ENCODE measurements at regions of chr11 and their contacts with region 1.

Region 1: DNA sequence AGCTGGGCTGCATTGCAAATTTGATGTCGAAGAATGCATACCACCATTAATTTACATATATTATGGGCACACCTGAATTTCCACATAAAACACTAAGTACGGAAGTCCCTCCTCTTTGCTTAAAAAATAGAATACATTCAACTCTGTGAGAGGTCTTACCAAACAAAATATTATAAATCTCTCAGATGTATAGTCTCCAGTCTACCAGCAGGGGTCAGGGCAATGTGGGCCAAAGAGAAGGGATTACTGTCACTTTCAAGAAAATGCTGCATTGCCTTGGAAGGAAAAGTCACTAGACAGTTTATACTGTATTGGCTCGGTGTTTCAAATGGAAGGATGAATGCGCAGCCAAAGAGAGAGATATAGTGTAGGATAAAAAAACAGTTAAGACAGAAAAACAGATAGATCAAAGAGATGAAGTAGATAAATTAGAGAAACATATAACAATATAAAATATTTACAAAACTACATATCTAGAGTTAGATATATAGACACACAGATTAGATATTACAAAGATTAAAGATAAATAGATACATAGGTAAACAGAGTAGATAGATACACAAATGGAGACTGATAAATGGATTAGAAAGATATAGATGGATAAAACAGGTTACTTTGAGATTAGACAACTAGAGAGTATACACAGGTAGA is 20.9 kb downstream of the SERGEF start:
- DNase-seq: peak; percentile 49
- ATAC-seq: peak; percentile 72
- H3K4me3 ChIP-seq: no peak overlapping the region
- H3K27ac ChIP-seq: no peak overlapping the region
- H3K4me1 ChIP-seq: peaks cover 4% of the 10 kb centered on the region
- H3K27me3 ChIP-seq: no peaks in the 10 kb centered on the region
- CTCF ChIP-seq: peak; percentile 84

Region 2: GRCh38 chr11:18012863-18013781 is 21.2 kb after region 1 on chr11 and contains the start of gene SERGEF:
- CTCF ChIA-PET with region 1: no interaction called
- POLR2A ChIA-PET with region 1: no interaction called
- intact Hi-C with region 1: loop called (anchors 1 kb)
- DNase-seq: peak; percentile 92
- ATAC-seq: peak; percentile 90
- H3K4me3 ChIP-seq: peak within 1 kb of the TSS; percentile 85
- H3K27ac ChIP-seq: no peak within 1 kb of the TSS
- H3K4me1 ChIP-seq: peaks cover 15% of the 10 kb centered on the region; the same call in 1 of the 2 replicates
- H3K27me3 ChIP-seq: no peaks in the 10 kb centered on the region
- CTCF ChIP-seq: no peak
- total RNA-seq, gene SERGEF: 13.7 and 14.0 TPM in 2 replicates

Region 3: GRCh38 chr11:18081551-18081950 is 89.6 kb after region 1 on chr11:
- CTCF ChIA-PET with region 1: no interaction called
- POLR2A ChIA-PET with region 1: no interaction called
- intact Hi-C with region 1: loop called (anchors 5 kb)
- DNase-seq: no peak
- ATAC-seq: no peak
- H3K4me3 ChIP-seq: no peak overlapping the region
- H3K27ac ChIP-seq: no peak overlapping the region
- H3K4me1 ChIP-seq: no peaks in the 10 kb centered on the region
- H3K27me3 ChIP-seq: no peaks in the 10 kb centered on the region
- CTCF ChIP-seq: no peak

Region 4: DNA sequence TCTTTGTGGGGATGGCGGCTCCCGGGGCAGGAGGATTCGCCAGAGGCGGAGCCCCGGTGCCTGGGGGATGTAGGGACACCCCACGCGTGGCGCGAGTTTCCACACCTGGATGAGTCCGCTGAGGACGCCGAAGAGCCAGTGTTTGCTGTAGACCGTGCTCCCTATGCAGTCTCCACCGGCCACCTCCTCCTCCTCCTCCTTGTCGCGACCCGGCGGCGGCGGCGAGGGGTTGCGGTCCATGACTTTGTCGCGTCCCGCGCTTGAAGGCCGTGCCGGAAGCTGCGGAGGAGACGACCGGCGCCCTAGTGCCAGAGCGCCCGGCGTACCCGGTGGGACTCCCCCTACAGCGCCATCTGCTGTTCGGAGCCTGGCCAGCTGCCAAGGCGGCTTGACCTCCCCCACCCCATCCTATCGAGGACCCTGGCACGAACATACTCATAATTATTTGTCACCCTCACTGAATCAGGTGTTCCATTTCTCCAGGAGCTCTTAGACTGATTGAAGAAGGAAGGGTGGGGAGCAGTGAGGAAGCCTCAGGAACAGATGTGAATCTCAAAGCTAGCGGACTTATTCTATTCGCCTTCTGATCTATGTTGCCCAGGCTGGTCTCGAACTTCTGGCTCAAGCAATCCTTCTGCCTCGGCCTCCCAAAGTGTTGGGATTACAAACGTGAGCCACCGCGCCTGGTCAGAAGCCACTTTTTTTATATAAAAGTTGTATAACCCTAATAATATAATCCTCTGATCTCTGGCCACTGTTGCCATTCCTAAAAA is 114.1 kb after region 1 on chr11 and contains the start of gene SAAL1:
- CTCF ChIA-PET with region 1: interaction called, 6 read pairs
- POLR2A ChIA-PET with region 1: no interaction called
- intact Hi-C with region 1: loop called (anchors 1 kb)
- DNase-seq: peak; percentile 77
- ATAC-seq: peak; percentile 93
- H3K4me3 ChIP-seq: peak within 1 kb of the TSS; percentile 93
- H3K27ac ChIP-seq: peak within 1 kb of the TSS; percentile 6; the same call in 1 of the 2 replicates
- H3K4me1 ChIP-seq: peaks cover 21% of the 10 kb centered on the region
- H3K27me3 ChIP-seq: no peaks in the 10 kb centered on the region
- CTCF ChIP-seq: peak; percentile 81
- total RNA-seq, gene SAAL1: 21.5 and 25.4 TPM in 2 replicates

Measured in PC-3 (cell line).